Activated CD8-positive, alpha-beta T cell treated with anti-CD3 and anti-CD28 coated beads for 36 hours (primary cell): ENCODE measurements at regions of chr17 and their contacts with region 1.

Region 1: DNA sequence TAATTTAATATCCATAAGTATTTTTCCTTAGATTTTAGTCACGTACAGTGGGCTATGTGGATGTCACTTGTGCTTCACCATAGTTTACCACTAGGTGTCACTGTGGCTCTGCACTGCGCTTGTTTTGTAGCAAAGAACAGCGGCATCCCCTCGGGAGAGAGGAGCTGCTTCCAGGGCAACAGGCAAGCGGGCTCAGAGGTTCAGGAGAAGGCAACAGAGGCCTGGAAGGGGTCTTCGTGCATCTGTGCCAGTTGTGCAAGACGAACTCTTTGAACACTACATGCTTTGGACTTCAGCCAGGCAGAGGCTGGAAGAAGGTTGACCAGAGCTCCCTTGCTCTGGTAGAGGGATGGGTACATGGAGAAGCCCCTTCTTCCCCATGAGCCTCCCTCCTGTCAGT is 20.6 kb downstream of the CYB561 start:
- DNase-seq: peak; percentile 79
- ATAC-seq: peak; percentile 92
- H3K4me3 Mint-ChIP-seq: no peak overlapping the region
- H3K27ac Mint-ChIP-seq: no peak overlapping the region
- H3K4me1 Mint-ChIP-seq: peaks cover 28% of the 10 kb centered on the region
- H3K27me3 Mint-ChIP-seq: no peaks in the 10 kb centered on the region
- CTCF ChIP-seq: peak; percentile 97

Region 2: DNA sequence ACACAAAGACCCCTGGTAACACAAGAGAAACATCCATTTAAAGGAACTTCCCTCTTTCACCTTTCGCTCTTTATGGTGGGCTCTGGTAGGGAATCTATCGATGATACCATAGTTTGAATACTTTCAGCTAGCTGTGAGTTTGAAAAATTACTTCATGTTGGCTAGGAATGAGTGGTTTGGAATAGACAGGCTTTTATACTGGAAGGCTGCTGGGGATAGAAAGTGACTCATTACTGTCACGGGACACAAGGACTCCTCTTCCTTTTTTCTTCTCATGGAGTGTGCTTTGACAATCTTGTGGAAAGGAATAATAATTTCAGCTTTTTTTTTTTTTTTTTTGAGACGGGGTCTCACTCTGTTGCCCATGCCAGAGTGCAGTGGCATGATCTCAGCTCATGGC is 56.2 kb before region 1 on chr17:
- CTCF ChIA-PET with region 1: no interaction called
- POLR2A ChIA-PET with region 1: no interaction called
- intact Hi-C with region 1: no loop called
- DNase-seq: no peak
- ATAC-seq: no peak
- H3K4me3 Mint-ChIP-seq: no peak overlapping the region
- H3K27ac Mint-ChIP-seq: no peak overlapping the region
- H3K4me1 Mint-ChIP-seq: no peaks in the 10 kb centered on the region
- H3K27me3 Mint-ChIP-seq: no peaks in the 10 kb centered on the region
- CTCF ChIP-seq: no peak

Region 3: GRCh38 chr17:63406689-63407330 is 18.7 kb before region 1 on chr17:
- CTCF ChIA-PET with region 1: interaction called, 29 read pairs
- POLR2A ChIA-PET with region 1: interaction called, 3 read pairs
- intact Hi-C with region 1: no loop called
- DNase-seq: peak; percentile 87
- ATAC-seq: peak; percentile 87
- H3K4me3 Mint-ChIP-seq: no peak overlapping the region
- H3K27ac Mint-ChIP-seq: no peak overlapping the region
- H3K4me1 Mint-ChIP-seq: peaks cover 3% of the 10 kb centered on the region
- H3K27me3 Mint-ChIP-seq: no peaks in the 10 kb centered on the region
- CTCF ChIP-seq: peak; percentile 79

Region 4: GRCh38 chr17:63445979-63446691 is 20.7 kb after region 1 on chr17 and contains the start of gene CYB561:
- CTCF ChIA-PET with region 1: interaction called, 32 read pairs
- POLR2A ChIA-PET with region 1: interaction called, 5 read pairs
- intact Hi-C with region 1: no loop called
- DNase-seq: peak; percentile 68
- ATAC-seq: peak; percentile 68
- H3K4me3 Mint-ChIP-seq: peak within 1 kb of the TSS; percentile 69
- H3K27ac Mint-ChIP-seq: peak within 1 kb of the TSS; percentile 80
- H3K4me1 Mint-ChIP-seq: peaks cover 21% of the 10 kb centered on the region
- H3K27me3 Mint-ChIP-seq: peaks cover 3% of the 10 kb centered on the region
- CTCF ChIP-seq: peak; percentile 53
- total RNA-seq, gene CYB561: 1.5 to 2.2 TPM

Region 5: DNA sequence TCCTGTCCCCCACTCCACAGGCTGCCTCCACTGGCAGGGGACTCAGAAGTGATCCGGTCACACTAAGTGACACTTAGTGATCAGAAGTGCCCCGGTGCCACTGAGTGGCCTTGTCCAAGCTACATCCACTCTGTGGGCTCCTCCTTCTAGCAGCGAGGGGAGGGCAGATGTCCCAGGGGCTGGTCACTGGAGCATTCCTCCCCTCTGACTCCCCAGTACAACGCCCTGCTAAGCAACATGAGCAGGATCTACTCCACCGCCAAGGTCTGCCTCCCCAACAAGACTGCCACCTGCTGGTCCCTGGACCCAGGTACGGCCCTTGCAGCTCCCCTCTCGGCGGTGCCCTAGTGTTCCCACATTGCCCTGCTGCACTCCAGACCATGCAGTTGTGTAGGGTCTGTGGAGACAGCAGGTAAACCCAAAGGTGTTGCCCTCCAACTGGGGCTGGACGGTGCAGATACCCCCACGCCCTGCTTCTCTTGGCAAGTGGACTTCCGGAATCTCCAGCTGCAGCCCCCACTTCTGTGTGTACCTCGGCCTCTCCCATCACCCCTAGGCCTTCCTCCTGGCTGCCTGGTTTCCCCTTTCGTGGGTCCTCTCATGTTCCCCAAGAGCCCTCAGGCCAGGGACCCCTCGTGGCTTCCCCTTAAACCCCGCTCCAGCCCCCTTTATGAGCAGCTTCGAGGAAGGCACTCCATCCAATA is 53.5 kb after region 1 on chr17:
- CTCF ChIA-PET with region 1: interaction called, 231 read pairs
- POLR2A ChIA-PET with region 1: interaction called, 6 read pairs
- intact Hi-C with region 1: loop called (anchors 2 kb)
- DNase-seq: peak; percentile 88
- ATAC-seq: peak; percentile 87
- H3K4me3 Mint-ChIP-seq: no peak overlapping the region
- H3K27ac Mint-ChIP-seq: no peak overlapping the region
- H3K4me1 Mint-ChIP-seq: peaks cover 10% of the 10 kb centered on the region
- H3K27me3 Mint-ChIP-seq: peaks cover 29% of the 10 kb centered on the region
- CTCF ChIP-seq: peak; percentile 74

Region 6: GRCh38 chr17:63549946-63550807 is 124.7 kb after region 1 on chr17 and contains the start of gene DCAF7:
- CTCF ChIA-PET with region 1: interaction called, 11 read pairs
- POLR2A ChIA-PET with region 1: no interaction called
- intact Hi-C with region 1: no loop called
- DNase-seq: peak; percentile 100
- ATAC-seq: peak; percentile 96
- H3K4me3 Mint-ChIP-seq: peak within 1 kb of the TSS; percentile 92
- H3K27ac Mint-ChIP-seq: peak within 1 kb of the TSS; percentile 96
- H3K4me1 Mint-ChIP-seq: peaks cover 32% of the 10 kb centered on the region
- H3K27me3 Mint-ChIP-seq: no peaks in the 10 kb centered on the region
- CTCF ChIP-seq: no peak
- total RNA-seq, gene DCAF7: 104 to 105 TPM

Region 7: GRCh38 chr17:63600569-63601438 is 175.3 kb after region 1 on chr17 and contains the start of gene TACO1:
- CTCF ChIA-PET with region 1: interaction called, 19 read pairs
- POLR2A ChIA-PET with region 1: no interaction called
- intact Hi-C with region 1: no loop called
- DNase-seq: peak; percentile 83
- ATAC-seq: peak; percentile 95
- H3K4me3 Mint-ChIP-seq: peak within 1 kb of the TSS; percentile 95
- H3K27ac Mint-ChIP-seq: peak within 1 kb of the TSS; percentile 92
- H3K4me1 Mint-ChIP-seq: peaks cover 35% of the 10 kb centered on the region
- H3K27me3 Mint-ChIP-seq: no peaks in the 10 kb centered on the region
- CTCF ChIP-seq: no peak
- total RNA-seq, gene TACO1: 27.0 to 30.4 TPM

Region 8: GRCh38 chr17:63675607-63676413 is 250.3 kb after region 1 on chr17:
- CTCF ChIA-PET with region 1: interaction called, 17 read pairs
- POLR2A ChIA-PET with region 1: no interaction called
- intact Hi-C with region 1: no loop called
- DNase-seq: no peak
- ATAC-seq: no peak
- H3K4me3 Mint-ChIP-seq: no peak overlapping the region
- H3K27ac Mint-ChIP-seq: no peak overlapping the region
- H3K4me1 Mint-ChIP-seq: peaks cover 5% of the 10 kb centered on the region
- H3K27me3 Mint-ChIP-seq: no peaks in the 10 kb centered on the region
- CTCF ChIP-seq: no peak